ENCODE measurements at regions of chr12 and their contacts with region 1.

Region 1: GRCh38 chr12:101414533-101415119 is 7.1 kb upstream of the ARL1 start:
- DNase-seq: peak; percentile 71 to 82
- H3K4me3 ChIP-seq: no peak overlapping the region
- H3K4me1 ChIP-seq: no peaks in the 10 kb centered on the region
- H3K27me3 ChIP-seq: 0 out of 2 replicates have a peak, but pooled peaks cover 2% of the 10 kb centered on the region

Region 2: GRCh38 chr12:101267111-101267510 is 147.5 kb before region 1 on chr12:
- in situ Hi-C with region 1: no loop called
- DNase-seq: no peak
- H3K4me3 ChIP-seq: no peak overlapping the region
- H3K4me1 ChIP-seq: no peaks in the 10 kb centered on the region
- H3K27me3 ChIP-seq: peaks cover 12% of the 10 kb centered on the region

Region 3: GRCh38 chr12:101594700-101595099 is 180.1 kb after region 1 on chr12 and contains the start of gene MYBPC1:
- in situ Hi-C with region 1: no loop called
- DNase-seq: peak in 1 of 2 experiments; percentile 20
- H3K4me3 ChIP-seq: no peak within 1 kb of the TSS
- H3K4me1 ChIP-seq: peaks cover 12% of the 10 kb centered on the region
- H3K27me3 ChIP-seq: no peaks in the 10 kb centered on the region

Region 4: GRCh38 chr12:101759396-101760047 is 344.9 kb after region 1 on chr12:
- in situ Hi-C with region 1: loop called (anchors 10 kb)
- DNase-seq: peak; percentile 28 to 30
- H3K4me3 ChIP-seq: no peak overlapping the region
- H3K4me1 ChIP-seq: no peaks in the 10 kb centered on the region
- H3K27me3 ChIP-seq: no peaks in the 10 kb centered on the region

Region 5: DNA sequence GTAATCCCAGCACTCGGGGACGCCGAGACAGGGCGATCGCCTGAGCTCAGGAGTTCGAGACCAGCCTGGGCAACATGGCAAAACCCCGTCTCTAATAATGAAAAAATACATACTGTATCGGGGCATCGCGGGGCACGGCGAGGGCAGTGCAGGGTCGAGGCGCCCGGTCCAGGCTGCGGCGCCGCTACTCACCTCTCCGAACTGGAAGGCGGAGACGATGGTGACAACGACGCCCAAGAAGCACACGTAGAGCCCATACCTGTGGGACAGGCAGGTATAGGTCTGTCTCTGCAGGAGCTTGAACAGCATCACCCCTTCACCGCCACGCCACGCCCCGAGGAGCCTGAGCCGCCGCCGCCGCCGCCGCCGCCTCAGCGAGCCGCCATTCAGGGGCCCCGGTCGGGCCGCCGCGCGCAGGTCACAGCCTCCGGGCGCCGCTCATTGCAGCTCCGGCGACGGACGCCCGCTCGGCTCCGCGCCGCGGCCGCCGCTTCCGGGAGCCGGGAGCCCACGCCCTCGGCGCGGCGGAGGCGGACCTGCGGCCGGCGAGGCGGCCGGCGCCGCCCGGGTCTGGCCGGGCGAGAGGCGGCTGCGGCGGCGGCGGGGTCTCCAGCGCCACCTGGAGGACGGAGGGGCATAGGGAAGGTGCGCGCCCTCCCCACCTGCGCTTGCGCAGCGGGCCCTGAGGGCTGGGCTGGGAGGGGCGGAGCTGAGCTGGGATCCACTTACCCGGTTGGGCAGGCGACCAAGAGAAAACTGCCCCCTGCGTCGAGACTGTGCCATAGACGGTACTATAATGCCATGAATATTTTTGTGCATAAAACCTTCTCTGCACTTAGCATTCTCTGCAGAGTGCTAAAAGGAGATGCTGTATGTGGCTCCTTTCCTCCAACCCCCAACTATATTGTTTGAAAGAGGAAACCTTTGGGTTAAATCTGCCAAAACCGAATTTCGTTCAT is 416.0 kb after region 1 on chr12 and contains the start of gene GNPTAB:
- in situ Hi-C with region 1: loop called (anchors 10 kb)
- DNase-seq: peak; percentile 92 to 96
- H3K4me3 ChIP-seq: peak within 1 kb of the TSS; percentile 74
- H3K4me1 ChIP-seq: peaks cover 24% of the 10 kb centered on the region
- H3K27me3 ChIP-seq: no peaks in the 10 kb centered on the region

Region 6: DNA sequence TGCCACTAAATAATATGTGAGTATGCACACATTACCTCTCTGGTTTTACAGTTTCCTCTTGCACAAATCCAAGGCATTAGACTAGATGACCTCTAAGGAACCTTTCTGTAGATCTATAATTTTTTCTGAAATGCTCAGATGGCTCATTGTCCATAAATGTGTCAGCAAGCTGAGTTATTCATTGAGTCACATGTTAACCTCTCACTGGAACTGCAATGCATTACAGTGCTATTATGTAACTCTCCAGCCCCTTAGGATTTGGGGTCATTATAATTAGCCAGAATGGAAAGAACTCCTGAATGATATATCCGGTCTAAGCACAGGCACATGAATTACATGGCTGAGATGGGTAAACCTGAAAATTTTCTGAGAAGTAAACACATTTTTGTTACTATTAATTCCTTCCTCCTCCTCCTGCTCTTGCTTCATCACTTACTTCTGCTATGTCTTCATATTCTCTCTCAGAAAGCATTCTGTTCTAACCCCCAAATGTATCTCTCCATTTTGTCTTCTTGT is 442.5 kb after region 1 on chr12:
- in situ Hi-C with region 1: no loop called
- DNase-seq: no peak
- H3K4me3 ChIP-seq: no peak overlapping the region
- H3K4me1 ChIP-seq: peaks cover 5% of the 10 kb centered on the region
- H3K27me3 ChIP-seq: no peaks in the 10 kb centered on the region